Right ventricle myocardium inferior (tissue), 1 donor: ENCODE measurements at regions of chr12 and their contacts with region 1.

Region 1: GRCh38 chr12:92987362-92987761 is 58.3 kb upstream of the EEA1 start:
- DNase-seq: no peak
- ATAC-seq: peak; percentile 80

Region 2: GRCh38 chr12:93060666-93061471 is 73.5 kb after region 1 on chr12:
- intact Hi-C with region 1: loop called (anchors 1 kb)
- DNase-seq: no peak
- ATAC-seq: peak; percentile 26

Region 3: GRCh38 chr12:93109551-93110203 is 122.3 kb after region 1 on chr12:
- intact Hi-C with region 1: loop called (anchors 5 kb)
- DNase-seq: no peak
- ATAC-seq: peak; percentile 11

Region 4: GRCh38 chr12:93183940-93184671 is 196.7 kb after region 1 on chr12:
- intact Hi-C with region 1: loop called (anchors 5 kb)
- DNase-seq: no peak
- ATAC-seq: peak; percentile 87

Region 5: GRCh38 chr12:93397412-93397811 is 410.1 kb after region 1 on chr12:
- intact Hi-C with region 1: loop called (anchors 5 kb)
- DNase-seq: no peak
- ATAC-seq: no peak

Region 6: GRCh38 chr12:93419388-93420034 is 432.1 kb after region 1 on chr12:
- intact Hi-C with region 1: loop called (anchors 2 kb)
- DNase-seq: no peak
- ATAC-seq: peak; percentile 49